Activated B cell treated with CpG ODN at 0.5 μM for 24 hours (primary cell): ENCODE measurements at regions of chr17 and their contacts with region 1.

Region 1: GRCh38 chr17:37791447-37792399 is 46.9 kb upstream of the HNF1B start:
- DNase-seq: no peak
- ATAC-seq: peak; percentile 97
- H3K4me3 Mint-ChIP-seq: no peak overlapping the region
- H3K27ac Mint-ChIP-seq: no peak overlapping the region
- H3K4me1 Mint-ChIP-seq: peaks cover 19% of the 10 kb centered on the region
- H3K27me3 Mint-ChIP-seq: peaks cover 11% of the 10 kb centered on the region
- CTCF ChIP-seq: no peak

Region 2: DNA sequence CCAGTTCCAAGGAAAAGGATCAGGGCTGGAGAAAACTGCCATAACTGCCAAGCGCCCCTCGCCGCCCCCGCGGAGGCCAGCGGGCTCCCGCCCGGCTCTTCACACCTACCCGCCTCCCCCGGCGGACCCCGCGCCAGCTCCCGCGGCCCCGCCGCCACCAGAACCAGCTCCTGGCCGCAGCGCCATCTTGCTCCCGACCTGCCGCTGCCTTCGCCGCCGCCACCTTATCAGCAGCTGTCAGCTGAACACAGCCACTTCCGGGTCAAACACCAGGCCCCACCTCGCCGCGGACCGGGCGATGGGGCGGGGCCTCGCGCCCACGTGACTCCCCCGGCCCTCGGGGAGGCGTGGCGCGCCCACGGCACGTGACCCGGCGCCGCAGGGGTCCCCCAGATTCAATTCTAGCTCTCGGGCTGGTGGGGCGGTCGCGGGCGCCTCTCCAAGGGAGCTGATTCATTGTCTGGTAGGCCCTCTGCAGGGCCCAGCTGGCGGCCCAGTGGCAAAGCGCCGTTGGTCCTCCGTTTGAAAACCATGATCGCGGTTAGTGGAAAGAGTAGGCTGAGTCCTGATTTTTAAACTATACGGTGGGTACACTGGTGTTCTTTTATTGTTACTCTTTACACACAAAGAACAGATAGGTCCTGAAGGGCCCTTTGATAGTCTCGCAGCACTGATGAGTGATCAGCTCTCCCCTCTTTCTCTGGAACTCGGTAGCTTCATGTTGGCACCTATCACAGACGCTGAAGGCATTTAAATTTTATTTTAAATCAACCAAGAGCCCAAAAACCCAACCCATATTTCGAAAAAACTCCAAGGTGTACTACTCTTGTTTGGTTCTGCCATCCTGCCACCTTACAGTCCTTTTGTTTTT is 182.3 kb before region 1 on chr17 and contains the start of gene SYNRG:
- CTCF ChIA-PET with region 1: interaction called, 7 read pairs
- POLR2A ChIA-PET with region 1: interaction called, 9 read pairs
- intact Hi-C with region 1: loop called (anchors 1 kb)
- DNase-seq: peak; percentile 98
- ATAC-seq: peak; percentile 85
- H3K4me3 Mint-ChIP-seq: peak within 1 kb of the TSS; percentile 94
- H3K27ac Mint-ChIP-seq: peak within 1 kb of the TSS; percentile 92
- H3K4me1 Mint-ChIP-seq: peaks cover 42% of the 10 kb centered on the region
- H3K27me3 Mint-ChIP-seq: no peaks in the 10 kb centered on the region
- CTCF ChIP-seq: no peak
- total RNA-seq, gene SYNRG: 83.7 and 89.8 TPM in 2 replicates

Region 3: DNA sequence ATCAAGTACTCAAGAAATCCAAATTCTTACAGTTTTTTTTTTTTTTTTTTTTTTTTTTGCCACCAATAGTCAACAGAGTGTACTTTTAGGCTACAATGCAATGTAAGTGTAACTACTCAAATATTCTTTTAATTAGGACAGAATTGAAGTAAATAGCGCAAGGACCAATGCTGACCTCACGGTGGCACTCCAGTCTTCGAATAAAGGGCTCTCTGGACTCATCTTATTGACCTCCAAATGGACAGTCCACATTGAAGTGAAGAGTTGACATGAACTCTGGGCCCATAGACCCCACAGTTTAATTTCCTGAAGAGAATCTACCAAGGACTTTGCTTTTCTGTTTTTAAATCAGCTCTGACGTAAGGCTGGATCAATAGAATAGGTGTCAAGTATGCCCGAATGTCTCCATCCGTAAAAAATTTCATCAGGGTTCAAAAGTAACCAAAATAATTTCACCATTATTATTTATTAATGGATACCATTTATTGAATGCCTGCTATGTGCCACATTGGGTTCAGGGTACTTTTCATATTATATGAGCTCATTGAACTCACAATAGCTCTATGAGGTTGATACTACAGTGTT is 141.2 kb before region 1 on chr17:
- CTCF ChIA-PET with region 1: interaction called, 9 read pairs
- POLR2A ChIA-PET with region 1: interaction called, 3 read pairs
- intact Hi-C with region 1: loop called (anchors 2 kb)
- DNase-seq: no peak
- ATAC-seq: no peak
- H3K4me3 Mint-ChIP-seq: no peak overlapping the region
- H3K27ac Mint-ChIP-seq: no peak overlapping the region
- H3K4me1 Mint-ChIP-seq: no peaks in the 10 kb centered on the region
- H3K27me3 Mint-ChIP-seq: peaks cover 33% of the 10 kb centered on the region
- CTCF ChIP-seq: no peak

Region 4: DNA sequence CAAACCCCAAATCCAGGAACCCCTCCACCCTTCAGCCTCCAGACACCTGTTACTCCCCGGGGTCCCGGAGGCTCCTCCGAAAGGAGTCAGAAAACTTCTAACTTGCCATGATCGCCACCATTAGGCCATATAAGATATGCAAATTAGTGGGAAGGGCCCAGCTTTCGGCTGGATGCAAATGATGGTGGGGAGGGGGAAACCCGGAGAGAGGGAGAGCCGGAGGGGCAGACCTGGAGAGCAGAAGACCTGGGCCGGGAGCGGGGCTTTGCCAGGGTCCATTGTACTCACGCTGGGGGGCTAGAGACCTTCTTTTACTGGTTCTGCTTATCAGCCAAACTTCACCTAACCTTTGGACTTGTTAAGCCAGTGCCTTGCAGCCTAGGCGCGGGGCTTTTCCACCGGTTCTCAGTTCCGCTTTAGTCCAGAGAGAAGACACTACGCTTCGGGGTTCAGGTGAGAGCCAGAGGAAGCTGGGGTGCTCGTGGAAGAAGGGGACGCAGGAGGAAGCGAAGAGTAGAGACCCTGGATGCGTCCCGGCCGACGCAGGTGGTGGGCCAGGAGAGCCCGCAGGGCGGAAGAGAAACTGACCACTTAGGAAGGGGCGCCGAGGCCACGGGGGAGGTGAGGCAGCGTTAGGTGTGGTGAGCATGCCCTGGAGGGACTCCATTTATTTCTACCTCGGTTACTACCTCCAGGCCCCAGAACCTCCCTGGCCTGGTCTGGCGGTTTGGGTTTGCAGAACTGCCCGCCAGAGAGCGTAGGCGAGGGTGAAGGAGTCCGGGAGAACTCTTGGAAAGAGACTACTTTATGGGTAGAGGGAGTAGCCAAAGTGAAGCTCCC is 46.5 kb before region 1 on chr17 and contains the start of gene HNF1B:
- CTCF ChIA-PET with region 1: interaction called, 32 read pairs
- POLR2A ChIA-PET with region 1: interaction called, 40 read pairs
- intact Hi-C with region 1: loop called (anchors 1 kb)
- DNase-seq: peak; percentile 67
- ATAC-seq: peak; percentile 73
- H3K4me3 Mint-ChIP-seq: peak within 1 kb of the TSS; percentile 97
- H3K27ac Mint-ChIP-seq: peak within 1 kb of the TSS; percentile 90
- H3K4me1 Mint-ChIP-seq: peaks cover 49% of the 10 kb centered on the region
- H3K27me3 Mint-ChIP-seq: peaks cover 39% of the 10 kb centered on the region
- CTCF ChIP-seq: no peak
- total RNA-seq, gene HNF1B: 36.3 and 40.0 TPM in 2 replicates

Region 5: DNA sequence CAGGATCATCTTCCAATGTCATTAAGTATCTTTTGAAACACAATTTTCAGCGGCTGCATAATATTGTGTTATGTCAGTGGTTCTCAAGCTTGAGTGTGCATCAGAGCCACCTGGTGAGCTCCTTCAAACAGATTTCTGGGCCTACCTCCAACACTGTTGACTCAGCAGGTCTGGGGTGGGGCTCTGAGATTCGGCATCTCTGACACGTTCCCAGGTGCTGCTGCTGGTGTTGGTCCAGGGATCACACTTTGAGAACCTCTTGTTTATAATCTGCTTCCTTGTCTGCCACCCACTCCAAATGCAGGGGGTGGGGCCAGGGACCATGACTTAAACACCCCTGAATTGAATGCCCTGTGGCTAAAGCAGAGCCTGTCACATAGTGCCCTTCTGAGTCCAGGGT is 27.0 kb after region 1 on chr17:
- CTCF ChIA-PET with region 1: interaction called, 22 read pairs
- POLR2A ChIA-PET with region 1: interaction called, 3 read pairs
- intact Hi-C with region 1: loop called (anchors 2 kb)
- DNase-seq: no peak
- ATAC-seq: no peak
- H3K4me3 Mint-ChIP-seq: no peak overlapping the region
- H3K27ac Mint-ChIP-seq: no peak overlapping the region
- H3K4me1 Mint-ChIP-seq: peaks cover 36% of the 10 kb centered on the region
- H3K27me3 Mint-ChIP-seq: peaks cover 13% of the 10 kb centered on the region
- CTCF ChIP-seq: no peak